ENCODE measurements at regions of chr9 and their contacts with region 1.

Region 1: GRCh38 chr9:4762108-4762885 is 21.3 kb upstream of the AK3 start:
- DNase-seq: peak; percentile 76
- H3K4me3 ChIP-seq: peak overlapping the region in 1 of 3 experiments; percentile 34
- H3K27ac ChIP-seq: peak overlapping the region; percentile 39
- H3K4me1 ChIP-seq: peaks cover 13% of the 10 kb centered on the region
- H3K27me3 ChIP-seq: no peaks in the 10 kb centered on the region
- CTCF ChIP-seq: peak; percentile 73 to 74
- POLR2A ChIP-seq: no peak

Region 2: DNA sequence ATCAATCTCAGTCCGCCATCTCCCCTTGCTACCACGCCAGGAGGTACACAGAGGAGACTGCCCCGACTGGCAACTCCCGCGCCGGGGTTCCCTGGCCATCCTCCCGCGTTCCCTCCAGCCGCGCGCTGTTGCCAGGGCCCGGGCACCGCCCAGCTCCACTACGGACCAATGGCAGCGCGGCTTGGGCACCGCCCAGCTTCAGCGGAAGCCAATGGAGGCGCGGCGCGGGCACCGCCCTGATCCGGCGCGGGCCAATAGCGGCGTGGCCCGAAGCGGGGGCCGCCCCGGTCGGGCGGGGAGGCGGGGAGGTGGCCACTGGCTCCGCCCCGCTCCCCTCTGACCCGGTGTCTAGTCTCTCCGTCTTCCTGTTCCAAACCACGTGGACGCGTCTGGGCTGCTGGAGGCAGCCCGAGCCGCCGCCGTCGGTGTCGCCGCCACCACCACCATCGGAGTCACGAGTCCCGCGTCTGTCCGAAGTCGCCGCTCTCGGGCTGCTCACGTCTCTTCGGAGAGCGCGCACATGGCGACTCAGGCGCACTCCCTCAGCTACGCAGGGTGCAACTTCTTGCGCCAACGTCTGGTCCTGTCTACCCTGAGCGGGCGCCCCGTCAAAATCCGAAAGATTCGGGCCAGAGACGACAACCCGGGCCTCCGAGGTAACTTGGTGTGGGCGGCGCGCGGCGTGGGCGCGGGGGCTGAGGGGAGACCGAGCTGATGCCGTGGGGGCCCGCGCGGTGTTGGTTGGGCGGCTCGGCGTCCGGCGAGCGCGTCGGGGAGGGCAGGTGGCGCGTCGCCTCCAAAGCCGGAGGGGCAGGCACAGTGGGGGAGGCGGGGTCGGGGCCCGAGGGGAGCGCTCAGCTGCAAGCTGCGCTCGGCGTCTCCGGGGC is 30.5 kb after region 1 on chr9 and contains the start of gene RCL1:
- CTCF ChIA-PET with region 1: interaction called, 54 read pairs
- POLR2A ChIA-PET with region 1: no interaction called
- dilution Hi-C with region 1: no loop called
- intact Hi-C with region 1: loop called (anchors 1 kb)
- DNase-seq: peak; percentile 98
- H3K4me3 ChIP-seq: peak within 1 kb of the TSS; percentile 92 to 94 (median 94)
- H3K27ac ChIP-seq: peak within 1 kb of the TSS; percentile 75
- H3K4me1 ChIP-seq: peaks cover 19% of the 10 kb centered on the region
- H3K27me3 ChIP-seq: peaks cover 0 to 3% of the 10 kb centered on the region in 2 experiments
- CTCF ChIP-seq: no peak
- POLR2A ChIP-seq: peak; percentile 60
- total RNA-seq, gene RCL1: 12.1 and 13.2 TPM in 2 replicates

Region 3: DNA sequence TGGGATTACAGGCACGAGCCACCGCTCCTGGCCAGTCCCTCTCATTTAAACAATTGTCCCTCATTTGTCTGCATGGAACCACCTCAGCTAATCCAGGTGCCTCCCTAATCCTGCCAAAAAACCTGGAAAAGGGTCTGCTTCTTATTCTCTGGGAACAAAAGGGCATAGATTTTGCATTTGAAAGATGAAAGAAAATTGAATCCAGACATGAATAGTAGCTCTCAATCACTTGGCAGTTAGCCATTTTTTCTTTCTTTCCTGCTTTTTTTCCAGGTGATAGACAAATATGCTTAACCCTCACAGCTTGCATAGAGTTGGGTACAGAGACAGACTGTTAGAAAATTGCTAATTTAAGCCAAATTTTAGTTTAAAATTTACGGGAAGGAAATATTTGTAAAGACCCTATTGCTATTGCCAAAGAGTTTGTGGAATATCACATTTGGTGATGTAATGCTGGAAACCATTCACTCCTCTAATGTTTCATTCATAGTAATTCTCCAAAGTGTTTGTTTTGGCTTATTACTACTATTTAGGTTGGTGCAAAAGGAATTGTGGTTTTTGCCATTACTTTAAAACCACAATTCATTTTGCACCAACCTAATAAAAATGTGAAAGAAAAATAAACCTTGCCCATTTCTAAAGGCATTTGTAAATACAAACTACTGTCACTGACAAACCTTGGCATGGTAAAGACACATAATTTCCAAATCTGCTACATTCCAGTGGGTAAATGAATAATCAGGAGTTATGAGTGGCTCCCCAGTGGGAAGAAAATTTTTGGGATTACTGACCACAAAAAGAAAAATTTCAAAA is 142.2 kb after region 1 on chr9:
- CTCF ChIA-PET with region 1: interaction called, 10 read pairs
- POLR2A ChIA-PET with region 1: no interaction called
- dilution Hi-C with region 1: no loop called
- intact Hi-C with region 1: no loop called
- DNase-seq: peak; percentile 30
- H3K4me3 ChIP-seq: no peak overlapping the region
- H3K27ac ChIP-seq: no peak overlapping the region
- H3K4me1 ChIP-seq: peaks cover 4% of the 10 kb centered on the region
- H3K27me3 ChIP-seq: no peaks in the 10 kb centered on the region
- CTCF ChIP-seq: no peak
- POLR2A ChIP-seq: no peak

Region 4: GRCh38 chr9:4984621-4985385 is 222.5 kb after region 1 on chr9 and contains the start of gene JAK2:
- CTCF ChIA-PET with region 1: interaction called, 215 read pairs
- POLR2A ChIA-PET with region 1: interaction called, 5 read pairs
- dilution Hi-C with region 1: no loop called
- intact Hi-C with region 1: loop called (anchors 1 kb)
- DNase-seq: peak; percentile 96
- H3K4me3 ChIP-seq: peak within 1 kb of the TSS; percentile 63 to 86 (median 79)
- H3K27ac ChIP-seq: peak within 1 kb of the TSS; percentile 90
- H3K4me1 ChIP-seq: peaks cover 36% of the 10 kb centered on the region
- H3K27me3 ChIP-seq: no peaks in the 10 kb centered on the region
- CTCF ChIP-seq: peak; percentile 23 to 61
- POLR2A ChIP-seq: peak; percentile 76
- total RNA-seq, gene JAK2: 9.7 and 10.3 TPM in 2 replicates

Region 5: GRCh38 chr9:5263351-5264218 is 501.3 kb after region 1 on chr9:
- CTCF ChIA-PET with region 1: interaction called, 3 read pairs
- POLR2A ChIA-PET with region 1: no interaction called
- dilution Hi-C with region 1: no loop called
- intact Hi-C with region 1: loop called (anchors 10 kb)
- DNase-seq: peak; percentile 47
- H3K4me3 ChIP-seq: no peak overlapping the region
- H3K27ac ChIP-seq: no peak overlapping the region
- H3K4me1 ChIP-seq: peaks cover 7% of the 10 kb centered on the region
- H3K27me3 ChIP-seq: no peaks in the 10 kb centered on the region
- CTCF ChIP-seq: no peak
- POLR2A ChIP-seq: no peak

Region 6: GRCh38 chr9:5437254-5438216 is 675.2 kb after region 1 on chr9 and contains the start of gene PLGRKT:
- CTCF ChIA-PET with region 1: interaction called, 15 read pairs
- POLR2A ChIA-PET with region 1: no interaction called
- dilution Hi-C with region 1: no loop called
- intact Hi-C with region 1: no loop called
- DNase-seq: peak; percentile 88
- H3K4me3 ChIP-seq: peak within 1 kb of the TSS; percentile 53 to 76 (median 69)
- H3K27ac ChIP-seq: peak within 1 kb of the TSS; percentile 93
- H3K4me1 ChIP-seq: peaks cover 30% of the 10 kb centered on the region
- H3K27me3 ChIP-seq: no peaks in the 10 kb centered on the region
- CTCF ChIP-seq: peak; percentile 7 to 25
- POLR2A ChIP-seq: peak; percentile 81
- total RNA-seq, gene PLGRKT: 20.3 and 21.2 TPM in 2 replicates

Region 7: GRCh38 chr9:5608298-5609225 is 846.3 kb after region 1 on chr9:
- CTCF ChIA-PET with region 1: interaction called, 10 read pairs
- POLR2A ChIA-PET with region 1: no interaction called
- dilution Hi-C with region 1: no loop called
- intact Hi-C with region 1: no loop called
- DNase-seq: peak; percentile 67
- H3K4me3 ChIP-seq: peak overlapping the region; percentile 2 to 98 (median 88)
- H3K27ac ChIP-seq: peak overlapping the region; percentile 51
- H3K4me1 ChIP-seq: peaks cover 9% of the 10 kb centered on the region
- H3K27me3 ChIP-seq: no peaks in the 10 kb centered on the region
- CTCF ChIP-seq: no peak
- POLR2A ChIP-seq: no peak

Measured in endothelial cell of umbilical vein (primary cell).